ENCODE measurements at regions of chr10 and their contacts with region 1.

Region 1: GRCh38 chr10:9342885-9343570 is 1288.5 kb downstream of the GATA3 start:
- DNase-seq: peak; percentile 17
- CTCF ChIP-seq: peak; percentile 63

Region 2: DNA sequence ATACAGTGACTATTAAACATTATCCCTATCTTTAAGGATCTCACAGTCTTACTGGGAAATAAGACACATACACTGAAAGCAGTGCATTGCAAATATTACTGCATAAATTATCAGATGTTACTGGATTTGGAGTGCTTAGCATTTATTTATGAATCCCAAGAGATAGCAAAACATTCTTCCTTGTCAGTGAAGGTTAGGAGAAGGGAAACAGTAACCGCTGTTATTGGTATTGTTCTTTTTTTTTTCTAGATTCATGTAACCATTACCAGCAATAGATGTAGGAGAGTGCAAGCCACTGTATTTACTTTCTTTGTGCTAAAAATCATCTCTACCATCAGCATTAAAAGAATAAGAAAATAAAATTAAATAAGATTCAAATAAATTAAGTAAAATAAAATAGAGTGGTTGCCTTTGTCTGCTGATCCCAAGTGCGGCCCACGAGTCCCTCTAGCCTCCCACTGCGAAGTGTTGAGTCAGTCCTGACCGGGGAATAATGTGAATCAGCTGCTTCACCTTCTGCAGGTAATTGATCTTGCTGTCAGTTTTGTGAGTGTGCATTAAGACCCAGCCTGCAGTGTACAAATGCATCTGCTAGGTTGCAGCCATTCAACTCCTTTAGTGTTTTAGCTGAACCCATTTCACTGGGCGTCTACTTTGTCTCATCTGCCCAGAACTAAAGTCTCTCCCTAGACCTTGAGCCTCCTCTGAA is 56.4 kb after region 1 on chr10:
- CTCF ChIA-PET with region 1: no interaction called
- POLR2A ChIA-PET with region 1: no interaction called
- DNase-seq: no peak
- CTCF ChIP-seq: no peak

Region 3: DNA sequence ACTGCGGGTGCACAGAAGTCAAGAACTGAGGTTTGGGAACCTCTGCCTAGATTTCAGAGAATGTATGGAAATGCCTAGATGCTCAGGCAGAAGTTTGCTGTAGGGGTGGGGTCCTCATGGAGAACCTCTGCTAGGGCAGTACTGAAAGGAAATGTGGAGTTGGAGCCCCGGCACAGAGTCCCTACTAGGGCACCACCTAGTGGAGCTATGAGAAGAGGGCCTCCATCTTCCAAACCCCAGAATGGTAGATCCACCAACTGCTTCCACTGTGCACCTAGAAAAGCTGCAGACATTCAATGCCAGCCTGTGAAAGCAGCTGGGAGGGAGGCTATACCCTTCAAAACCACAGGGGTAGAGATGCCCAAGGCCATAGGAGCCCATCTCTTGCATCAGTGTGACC is 338.6 kb after region 1 on chr10:
- CTCF ChIA-PET with region 1: interaction called, 13 read pairs
- POLR2A ChIA-PET with region 1: no interaction called
- DNase-seq: no peak
- CTCF ChIP-seq: no peak

Region 4: GRCh38 chr10:10677479-10677878 is 1334.5 kb after region 1 on chr10:
- CTCF ChIA-PET with region 1: interaction called, 11 read pairs
- POLR2A ChIA-PET with region 1: no interaction called
- DNase-seq: no peak
- CTCF ChIP-seq: peak; percentile 26